ENCODE measurements at regions of chr1 and their contacts with region 1.

Region 1: GRCh38 chr1:33455539-33456501 is 16.6 kb upstream of the ZSCAN20 start:
- DNase-seq: peak; percentile 77
- H3K4me3 ChIP-seq: no peak overlapping the region
- CTCF ChIP-seq: peak; percentile 87

Region 2: DNA sequence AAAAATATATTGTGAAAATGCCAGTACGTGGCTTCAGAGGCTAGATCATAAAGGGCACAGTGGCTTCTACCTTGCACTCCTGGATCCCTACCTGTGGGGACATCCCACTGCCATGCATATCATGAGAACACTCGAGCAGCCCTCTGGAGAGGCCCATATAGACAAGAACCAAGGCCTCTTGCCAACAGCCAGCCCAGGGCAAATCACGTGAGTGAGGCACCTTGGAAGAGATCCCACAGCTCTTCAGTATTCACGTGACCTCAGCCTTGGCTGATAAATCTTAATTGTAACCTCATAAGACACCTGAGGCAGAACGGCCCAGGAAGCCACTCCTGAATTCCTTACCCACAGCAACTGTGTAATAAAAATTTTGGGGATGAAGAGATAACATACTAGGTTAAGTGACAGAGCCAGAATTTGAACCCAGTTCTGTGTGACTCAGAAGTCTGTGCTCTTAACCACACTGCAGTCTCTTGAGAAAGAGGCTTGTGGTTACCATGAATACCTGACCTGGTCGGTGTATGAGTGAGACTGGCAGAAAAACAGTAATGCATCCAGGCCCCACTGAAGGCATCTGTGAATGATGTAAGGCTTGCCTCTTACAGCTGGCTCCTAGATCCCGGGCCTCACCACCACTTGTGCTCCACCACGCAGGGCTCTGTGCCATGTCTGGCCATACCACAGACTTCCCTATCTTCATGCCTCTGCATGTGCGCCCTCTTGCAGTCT is 128.1 kb before region 1 on chr1:
- CTCF ChIA-PET with region 1: interaction called, 14 read pairs
- POLR2A ChIA-PET with region 1: no interaction called
- DNase-seq: peak; percentile 96
- H3K4me3 ChIP-seq: no peak overlapping the region
- CTCF ChIP-seq: no peak

Region 3: DNA sequence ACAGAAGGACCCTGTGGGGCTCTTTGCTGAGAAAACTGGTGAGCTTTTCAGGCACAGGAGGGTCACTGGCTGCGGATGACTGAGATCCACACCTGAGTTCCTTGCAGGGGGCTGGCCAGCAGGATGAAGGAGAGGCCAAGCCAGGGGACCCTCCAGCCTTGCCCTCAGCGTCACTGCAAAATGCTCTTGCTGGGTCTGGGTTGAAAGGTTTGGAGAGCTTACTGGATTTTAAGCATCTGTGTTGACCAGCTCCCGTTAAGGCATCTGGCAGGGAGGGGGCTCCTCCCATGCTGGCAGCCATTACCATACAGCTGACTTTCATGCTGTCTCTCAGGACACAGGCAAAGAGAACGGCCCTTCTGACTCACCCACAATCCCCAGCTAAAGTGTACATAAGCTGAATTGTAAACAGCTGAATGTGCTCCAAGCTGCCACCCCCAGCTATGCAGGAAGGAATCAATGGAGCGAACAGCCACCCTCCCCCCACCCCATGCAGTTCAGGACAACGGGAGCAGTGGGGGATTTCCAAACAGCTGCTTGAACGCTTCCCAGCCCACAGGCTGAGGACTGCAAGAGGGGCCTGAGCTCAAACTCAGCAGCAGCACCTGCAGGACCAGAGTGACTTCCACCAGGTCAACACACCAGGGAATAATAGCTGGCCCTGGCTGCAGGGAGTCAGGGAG is 113.6 kb before region 1 on chr1:
- CTCF ChIA-PET with region 1: interaction called, 10 read pairs
- POLR2A ChIA-PET with region 1: interaction called, 4 read pairs
- DNase-seq: peak; percentile 91
- H3K4me3 ChIP-seq: peak overlapping the region; percentile 9; the same call in 1 of the 2 replicates
- CTCF ChIP-seq: no peak

Region 4: GRCh38 chr1:33367485-33368405 is 88.1 kb before region 1 on chr1:
- CTCF ChIA-PET with region 1: interaction called, 29 read pairs
- POLR2A ChIA-PET with region 1: no interaction called
- DNase-seq: no peak
- H3K4me3 ChIP-seq: no peak overlapping the region
- CTCF ChIP-seq: peak; percentile 97

Region 5: GRCh38 chr1:33384040-33384812 is 71.6 kb before region 1 on chr1:
- CTCF ChIA-PET with region 1: interaction called, 17 read pairs
- POLR2A ChIA-PET with region 1: no interaction called
- DNase-seq: peak; percentile 51
- H3K4me3 ChIP-seq: no peak overlapping the region
- CTCF ChIP-seq: no peak

Region 6: GRCh38 chr1:33430692-33431593 is 24.9 kb before region 1 on chr1 and contains the start of gene PHC2:
- CTCF ChIA-PET with region 1: interaction called, 12 read pairs
- POLR2A ChIA-PET with region 1: interaction called, 3 read pairs
- DNase-seq: no peak
- H3K4me3 ChIP-seq: peak within 1 kb of the TSS; percentile 73
- CTCF ChIP-seq: peak; percentile 43